ENCODE measurements at regions of chr7 and their contacts with region 1.

Region 1: DNA sequence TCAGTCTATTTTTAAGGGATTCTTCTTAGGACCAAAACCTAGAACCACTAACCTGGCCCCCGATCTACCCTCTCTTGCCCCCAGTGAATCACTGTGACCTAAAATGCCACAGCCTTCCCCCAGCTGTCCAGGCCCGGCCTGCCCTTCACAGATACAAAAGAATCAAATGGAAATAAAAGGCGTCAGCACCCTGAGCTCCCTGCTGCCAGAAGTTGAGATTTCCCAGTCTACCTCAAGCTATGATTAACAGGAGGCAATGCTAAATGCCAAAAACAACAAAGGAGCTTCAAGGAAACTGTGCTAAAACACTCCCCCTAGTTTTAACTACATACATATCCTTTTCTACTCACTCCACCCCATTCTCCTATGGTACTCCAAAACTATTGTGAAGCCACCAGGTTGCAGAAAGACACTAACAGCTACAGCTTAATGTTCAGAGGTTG is 67.8 kb downstream of the GSAP start:
- DNase-seq: peak; percentile 91
- H3K4me3 ChIP-seq: no peak overlapping the region
- H3K27ac ChIP-seq: no peak overlapping the region
- H3K4me1 ChIP-seq: peaks cover 22% of the 10 kb centered on the region
- H3K27me3 ChIP-seq: no peaks in the 10 kb centered on the region
- CTCF ChIP-seq: no peak
- POLR2A ChIP-seq: no peak

Region 2: GRCh38 chr7:77409739-77410547 is 61.6 kb after region 1 on chr7:
- CTCF ChIA-PET with region 1: interaction called, 5 read pairs
- POLR2A ChIA-PET with region 1: no interaction called
- dilution Hi-C with region 1: no loop called
- intact Hi-C with region 1: loop called (anchors 5 kb)
- DNase-seq: no peak
- H3K4me3 ChIP-seq: no peak overlapping the region
- H3K27ac ChIP-seq: no peak overlapping the region
- H3K4me1 ChIP-seq: peaks cover 12% of the 10 kb centered on the region
- H3K27me3 ChIP-seq: no peaks in the 10 kb centered on the region
- CTCF ChIP-seq: no peak
- POLR2A ChIP-seq: no peak

Region 3: DNA sequence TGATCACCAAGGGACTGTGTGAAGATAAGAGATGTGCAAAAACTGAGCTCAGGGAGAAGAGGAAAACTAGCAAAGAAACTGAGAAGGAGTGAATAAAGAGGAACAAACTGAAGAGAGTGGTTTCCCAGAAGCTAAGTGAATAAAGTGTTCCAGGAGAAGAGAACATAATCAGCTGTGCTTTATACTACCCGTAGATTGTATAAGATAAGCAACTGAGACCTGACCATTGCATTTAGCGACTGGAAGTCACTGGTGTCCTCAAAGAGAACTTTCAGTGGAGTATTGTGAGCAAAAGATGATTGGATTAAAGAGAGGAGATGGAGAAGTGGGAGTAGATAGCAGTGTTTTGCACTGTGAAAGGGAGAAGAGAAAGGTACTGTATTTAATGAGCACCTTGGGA is 464.8 kb after region 1 on chr7:
- CTCF ChIA-PET with region 1: no interaction called
- POLR2A ChIA-PET with region 1: no interaction called
- dilution Hi-C with region 1: no loop called
- intact Hi-C with region 1: no loop called
- DNase-seq: no peak
- H3K4me3 ChIP-seq: no peak overlapping the region
- H3K27ac ChIP-seq: no peak overlapping the region
- H3K4me1 ChIP-seq: peaks cover 9% of the 10 kb centered on the region
- H3K27me3 ChIP-seq: no peaks in the 10 kb centered on the region
- CTCF ChIP-seq: no peak
- POLR2A ChIP-seq: no peak

Region 4: GRCh38 chr7:77823787-77824186 is 475.4 kb after region 1 on chr7:
- CTCF ChIA-PET with region 1: no interaction called
- POLR2A ChIA-PET with region 1: no interaction called
- dilution Hi-C with region 1: no loop called
- intact Hi-C with region 1: no loop called
- DNase-seq: no peak
- H3K4me3 ChIP-seq: no peak overlapping the region
- H3K27ac ChIP-seq: no peak overlapping the region
- H3K4me1 ChIP-seq: no peaks in the 10 kb centered on the region
- H3K27me3 ChIP-seq: no peaks in the 10 kb centered on the region
- CTCF ChIP-seq: no peak
- POLR2A ChIP-seq: no peak